ENCODE measurements at regions of chr17 and their contacts with region 1.

Region 1: DNA sequence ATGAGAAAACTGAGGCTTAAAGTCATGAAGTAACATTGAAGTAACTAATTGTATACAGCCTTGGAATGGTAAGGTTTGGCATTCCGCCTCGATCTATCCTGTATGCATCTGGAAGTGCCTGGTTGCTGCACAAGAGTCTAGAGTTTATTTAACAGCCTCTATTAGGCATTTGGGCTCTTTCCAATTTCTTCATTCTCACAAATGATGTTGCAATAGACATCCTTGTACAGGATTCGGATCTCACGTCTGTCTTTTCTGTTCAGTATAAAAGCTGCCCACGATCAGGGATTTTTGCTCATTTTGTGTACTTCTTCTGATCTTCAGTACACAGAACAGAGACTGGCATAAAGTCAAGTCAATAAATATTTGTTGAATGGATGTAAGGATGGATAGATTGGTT is 100.5 kb downstream of the AIPL1 start:
- DNase-seq: no peak
- H3K4me3 ChIP-seq: no peak overlapping the region
- H3K27ac ChIP-seq: no peak overlapping the region
- H3K4me1 ChIP-seq: no peaks in the 10 kb centered on the region
- H3K27me3 ChIP-seq: peaks cover 3% of the 10 kb centered on the region
- CTCF ChIP-seq: no peak

Region 2: GRCh38 chr17:6269478-6269877 is 64.9 kb before region 1 on chr17:
- CTCF ChIA-PET with region 1: no interaction called
- dilution Hi-C with region 1: no loop called
- in situ Hi-C with region 1: no loop called
- intact Hi-C with region 1: no loop called
- DNase-seq: peak; percentile 34
- H3K4me3 ChIP-seq: no peak overlapping the region
- H3K27ac ChIP-seq: no peak overlapping the region
- H3K4me1 ChIP-seq: no peaks in the 10 kb centered on the region
- H3K27me3 ChIP-seq: no peaks in the 10 kb centered on the region
- CTCF ChIP-seq: no peak

Region 3: DNA sequence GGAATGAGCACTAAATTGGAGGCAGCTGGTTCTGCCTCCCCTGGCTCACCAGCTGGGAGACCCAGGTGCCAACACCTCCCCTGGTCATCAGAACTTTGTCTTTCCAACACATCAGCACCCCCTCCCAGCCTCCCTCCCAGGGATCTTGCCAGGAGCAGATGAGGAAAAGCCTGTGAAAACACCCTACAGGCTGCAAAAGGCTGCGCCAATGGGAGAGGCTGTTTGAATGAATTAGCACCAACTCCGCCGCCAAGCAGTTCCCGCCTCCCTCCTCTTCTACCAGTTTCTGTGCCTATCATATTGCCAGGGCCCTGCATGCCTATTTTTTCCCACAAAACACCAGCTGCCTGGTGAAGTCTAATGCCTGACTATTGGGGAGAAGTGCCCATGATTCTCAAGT is 36.4 kb before region 1 on chr17:
- CTCF ChIA-PET with region 1: no interaction called
- dilution Hi-C with region 1: loop called (anchors 5 kb)
- in situ Hi-C with region 1: no loop called
- intact Hi-C with region 1: no loop called
- DNase-seq: no peak
- H3K4me3 ChIP-seq: no peak overlapping the region
- H3K27ac ChIP-seq: no peak overlapping the region
- H3K4me1 ChIP-seq: no peaks in the 10 kb centered on the region
- H3K27me3 ChIP-seq: peaks cover 2% of the 10 kb centered on the region
- CTCF ChIP-seq: no peak

Region 4: DNA sequence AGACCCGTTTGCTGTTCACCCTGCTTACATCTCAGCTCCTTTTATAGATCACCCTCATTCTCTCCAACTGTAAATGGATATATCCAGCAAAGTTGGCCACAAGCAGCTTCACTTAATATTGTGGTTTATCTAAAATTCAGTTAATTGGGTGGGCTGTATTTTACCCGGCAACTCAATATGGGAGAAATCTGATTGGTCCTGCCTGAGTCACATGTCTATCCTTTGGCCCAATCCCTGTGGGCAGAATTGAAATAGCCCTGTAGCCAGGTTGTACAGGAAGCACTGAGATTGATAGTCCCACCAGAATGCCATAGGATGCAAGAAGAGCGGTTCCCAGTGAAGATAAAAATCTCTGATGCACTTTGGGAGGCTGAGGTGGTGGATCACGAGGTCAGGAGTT is 27.3 kb after region 1 on chr17:
- CTCF ChIA-PET with region 1: no interaction called
- dilution Hi-C with region 1: no loop called
- in situ Hi-C with region 1: no loop called
- intact Hi-C with region 1: no loop called
- DNase-seq: no peak
- H3K4me3 ChIP-seq: no peak overlapping the region
- H3K27ac ChIP-seq: no peak overlapping the region
- H3K4me1 ChIP-seq: peaks cover 11% of the 10 kb centered on the region
- H3K27me3 ChIP-seq: no peaks in the 10 kb centered on the region
- CTCF ChIP-seq: no peak

Region 5: GRCh38 chr17:6374761-6375312 is 40.4 kb after region 1 on chr17:
- CTCF ChIA-PET with region 1: no interaction called
- dilution Hi-C with region 1: loop called (anchors 5 kb)
- in situ Hi-C with region 1: no loop called
- intact Hi-C with region 1: no loop called
- DNase-seq: peak; percentile 93
- H3K4me3 ChIP-seq: peak overlapping the region in 1 of 3 experiments; percentile 1
- H3K27ac ChIP-seq: peak overlapping the region; percentile 74
- H3K4me1 ChIP-seq: peaks cover 19% of the 10 kb centered on the region
- H3K27me3 ChIP-seq: no peaks in the 10 kb centered on the region
- CTCF ChIP-seq: no peak

Region 6: DNA sequence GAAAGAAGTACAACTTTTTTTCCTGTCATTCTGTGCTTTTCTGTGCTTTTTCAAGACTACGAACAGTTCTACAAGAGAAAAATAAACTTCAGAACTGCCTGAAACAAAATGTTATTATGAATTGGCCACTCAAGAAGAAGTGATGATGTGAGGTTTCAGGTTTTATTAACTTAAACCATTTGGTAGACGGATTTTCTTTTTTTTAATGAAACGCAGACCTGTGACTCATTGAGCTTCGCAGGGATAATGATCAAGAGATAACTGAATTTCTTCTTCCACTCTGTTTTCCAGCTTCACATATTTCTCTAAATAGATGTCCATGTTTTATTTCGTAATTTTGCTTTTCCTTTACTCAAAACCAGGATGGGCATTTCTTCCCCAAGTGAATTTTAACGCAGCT is 67.9 kb after region 1 on chr17:
- CTCF ChIA-PET with region 1: no interaction called
- dilution Hi-C with region 1: loop called (anchors 5 kb)
- in situ Hi-C with region 1: no loop called
- intact Hi-C with region 1: no loop called
- DNase-seq: no peak
- H3K4me3 ChIP-seq: no peak overlapping the region
- H3K27ac ChIP-seq: no peak overlapping the region
- H3K4me1 ChIP-seq: no peaks in the 10 kb centered on the region
- H3K27me3 ChIP-seq: peaks cover 1% of the 10 kb centered on the region
- CTCF ChIP-seq: no peak

Measured in mammary epithelial cell (primary cell).